Activated naive CD4-positive, alpha-beta T cell treated with anti-CD3 and anti-CD28 coated beads for 36 hours (primary cell): ENCODE measurements at regions of chr16 and their contacts with region 1.

Region 1: GRCh38 chr16:30585400-30586189 is at the start of gene ZNF785:
- DNase-seq: peak; percentile 98
- H3K4me3 Mint-ChIP-seq: peak within 1 kb of the TSS; percentile 90
- H3K27ac Mint-ChIP-seq: peak within 1 kb of the TSS; percentile 90
- H3K4me1 Mint-ChIP-seq: peaks cover 32% of the 10 kb centered on the region
- H3K27me3 Mint-ChIP-seq: no peaks in the 10 kb centered on the region
- total RNA-seq, gene ZNF785: 11.9 to 13.2 TPM

Region 2: GRCh38 chr16:30557957-30558788 is 27.4 kb before region 1 on chr16 and contains the start of gene ZNF764:
- CTCF ChIA-PET with region 1: interaction called, 3 read pairs
- intact Hi-C with region 1: loop called (anchors 1 kb)
- DNase-seq: peak; percentile 99
- H3K4me3 Mint-ChIP-seq: peak within 1 kb of the TSS; percentile 84
- H3K27ac Mint-ChIP-seq: peak within 1 kb of the TSS; percentile 90
- H3K4me1 Mint-ChIP-seq: peaks cover 34% of the 10 kb centered on the region
- H3K27me3 Mint-ChIP-seq: no peaks in the 10 kb centered on the region
- total RNA-seq, gene ZNF764: 7.6 to 9.5 TPM

Region 3: DNA sequence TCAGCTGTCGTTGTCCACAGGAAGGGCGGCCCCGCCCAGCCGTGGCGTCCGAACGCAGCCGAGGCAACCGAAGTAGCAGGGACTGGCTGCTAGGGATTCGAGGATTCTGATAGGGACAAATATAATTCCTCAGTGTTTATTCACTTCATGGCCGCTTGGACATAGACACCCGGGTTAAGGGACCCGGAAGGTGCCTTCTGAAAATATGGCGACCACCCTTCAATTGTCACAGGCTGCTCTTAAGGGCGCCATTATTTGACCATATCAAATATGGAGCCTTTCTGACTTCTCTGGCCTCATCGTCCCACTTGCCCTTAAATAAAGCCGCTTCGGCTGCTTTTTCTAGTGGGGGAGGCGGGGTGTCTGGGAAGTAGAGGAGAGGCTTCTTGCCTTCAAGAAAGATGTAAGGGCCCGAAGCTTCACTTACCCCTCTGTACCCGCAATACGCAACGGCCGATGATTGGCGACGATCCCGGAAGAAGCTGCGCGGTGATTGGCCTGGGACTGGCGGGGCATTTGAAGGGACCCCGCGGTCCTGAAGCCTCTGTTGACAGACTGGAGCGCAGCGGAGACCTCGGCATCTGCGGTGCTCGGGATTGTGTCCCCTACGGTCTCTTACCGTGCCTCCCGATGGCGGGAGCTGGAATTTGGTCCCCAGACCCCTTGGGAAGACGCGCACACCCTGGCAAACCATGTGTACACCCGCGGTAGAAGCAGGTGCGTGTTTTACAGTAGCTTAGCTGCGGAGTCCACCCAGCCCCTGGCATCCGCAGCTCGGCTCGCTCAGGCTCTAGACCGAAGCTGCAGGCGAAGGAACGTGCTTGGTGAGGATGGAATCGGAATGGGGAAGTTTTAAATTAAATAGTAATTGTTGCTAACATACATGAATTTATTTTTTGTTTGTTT is 13.6 kb before region 1 on chr16 and contains the start of gene ZNF688:
- CTCF ChIA-PET with region 1: interaction called, 11 read pairs
- intact Hi-C with region 1: loop called (anchors 1 kb)
- DNase-seq: peak; percentile 94
- H3K4me3 Mint-ChIP-seq: peak within 1 kb of the TSS; percentile 89
- H3K27ac Mint-ChIP-seq: peak within 1 kb of the TSS; percentile 94
- H3K4me1 Mint-ChIP-seq: peaks cover 56% of the 10 kb centered on the region
- H3K27me3 Mint-ChIP-seq: no peaks in the 10 kb centered on the region
- total RNA-seq, gene ZNF688: 3.7 to 3.9 TPM

Region 4: DNA sequence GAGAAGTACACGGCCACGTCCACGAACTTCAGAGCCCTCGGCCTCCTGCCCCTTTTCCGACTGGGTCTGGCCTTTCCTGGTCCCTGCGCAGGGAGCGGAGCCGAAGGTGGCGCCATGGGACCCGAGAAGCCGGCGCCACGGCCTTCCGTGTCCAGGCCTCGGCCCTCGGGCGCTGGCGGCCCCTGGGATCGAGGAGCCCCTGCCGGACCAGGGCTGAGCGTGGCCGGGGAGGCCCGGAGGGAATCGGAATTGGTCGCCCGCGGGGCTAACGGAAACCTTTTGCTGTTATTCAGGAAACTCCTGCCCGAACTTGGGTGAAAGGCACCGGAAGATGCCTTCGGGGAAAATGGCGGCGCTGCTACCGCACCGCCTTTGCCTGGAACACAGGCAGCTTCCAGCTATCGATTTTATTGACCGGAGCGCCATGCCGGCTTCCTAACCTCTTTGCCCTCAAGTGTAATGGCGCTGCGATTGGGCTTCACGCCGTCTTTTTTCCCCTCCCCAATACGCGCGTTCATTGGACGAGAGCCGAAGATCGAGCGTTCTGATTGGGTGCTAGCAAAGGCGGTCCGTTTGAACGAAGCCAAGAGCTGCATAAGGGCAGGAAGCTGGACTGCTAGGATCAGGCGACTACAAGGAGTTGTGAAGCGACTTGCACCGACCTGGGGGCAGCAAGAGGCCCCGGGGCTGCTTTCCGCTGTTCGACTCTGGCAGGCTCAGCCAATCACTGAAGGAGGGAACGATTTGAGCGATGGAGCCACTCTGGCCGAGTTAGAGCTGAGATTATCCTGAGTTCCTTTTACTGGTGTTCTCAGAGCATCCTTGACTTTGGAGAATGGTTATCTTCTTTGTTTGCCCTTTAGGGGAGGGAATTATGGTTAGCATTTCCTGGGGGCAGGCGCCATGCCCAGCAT is 24.6 kb after region 1 on chr16 and contains the start of gene ZNF689:
- CTCF ChIA-PET with region 1: interaction called, 7 read pairs
- intact Hi-C with region 1: loop called (anchors 1 kb)
- DNase-seq: peak; percentile 98
- H3K4me3 Mint-ChIP-seq: peak within 1 kb of the TSS; percentile 83
- H3K27ac Mint-ChIP-seq: peak within 1 kb of the TSS; percentile 96
- H3K4me1 Mint-ChIP-seq: peaks cover 20% of the 10 kb centered on the region
- H3K27me3 Mint-ChIP-seq: no peaks in the 10 kb centered on the region
- total RNA-seq, gene ZNF689: 10.7 to 11.5 TPM

Region 5: GRCh38 chr16:30628627-30629540 is 43.3 kb after region 1 on chr16:
- CTCF ChIA-PET with region 1: no interaction called
- intact Hi-C with region 1: loop called (anchors 2 kb)
- DNase-seq: peak; percentile 97
- H3K4me3 Mint-ChIP-seq: peak overlapping the region; percentile 55
- H3K27ac Mint-ChIP-seq: peak overlapping the region; percentile 82
- H3K4me1 Mint-ChIP-seq: peaks cover 8% of the 10 kb centered on the region
- H3K27me3 Mint-ChIP-seq: no peaks in the 10 kb centered on the region